ENCODE measurements at regions of chr3 and their contacts with region 1.

Region 1: GRCh38 chr3:70726961-70727360 is 414.5 kb upstream of the MDFIC2 start:
- DNase-seq: no peak

Region 2: DNA sequence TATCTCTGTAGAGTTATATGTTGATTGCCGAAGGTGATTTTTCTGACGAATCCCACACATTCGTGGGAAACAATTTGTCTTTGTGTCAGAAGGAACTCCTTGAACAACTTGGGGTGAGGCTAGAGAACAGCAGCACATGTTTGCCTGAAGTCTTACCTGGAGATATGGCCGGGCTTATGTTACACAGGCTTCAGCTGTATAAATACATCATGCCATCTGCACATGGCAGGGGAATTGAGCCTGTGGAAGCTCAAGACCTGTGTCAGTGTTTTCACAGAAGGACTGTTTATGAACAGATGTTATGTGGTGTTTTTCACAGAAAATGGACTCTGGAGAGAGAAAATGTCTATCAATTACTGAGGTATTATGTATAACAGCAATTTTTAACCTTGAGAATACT is 210.9 kb before region 1 on chr3:
- intact Hi-C with region 1: no loop called
- DNase-seq: no peak

Region 3: DNA sequence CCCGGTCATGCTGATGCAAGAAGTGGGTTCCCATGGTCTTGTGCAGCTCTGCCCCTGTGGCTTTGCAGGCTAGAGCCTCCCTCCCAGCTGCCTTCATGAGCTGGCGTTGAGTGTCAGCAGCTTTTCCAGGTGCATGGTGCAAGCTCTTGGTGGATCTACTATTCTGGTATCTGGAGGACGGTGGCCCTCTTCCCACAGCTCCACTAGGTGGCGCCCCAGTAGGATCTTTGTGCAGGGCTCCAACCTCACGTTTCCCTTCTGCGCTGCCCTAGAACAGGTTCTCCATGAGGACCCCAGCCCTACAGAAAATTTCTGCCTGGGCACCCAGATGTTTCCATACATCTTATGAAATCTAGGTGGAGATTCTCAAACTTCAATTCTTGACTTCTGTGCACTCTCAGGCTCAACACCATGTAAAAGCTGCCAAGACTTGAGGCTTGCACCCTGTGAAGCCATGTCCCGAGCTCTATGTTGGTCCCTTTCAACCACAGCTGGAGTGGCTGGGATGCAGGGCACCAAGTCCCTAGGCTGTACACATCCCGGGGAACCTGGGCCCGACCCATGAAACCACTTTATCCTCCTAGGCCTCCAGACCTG is 176.1 kb before region 1 on chr3:
- intact Hi-C with region 1: no loop called
- DNase-seq: no peak

Region 4: DNA sequence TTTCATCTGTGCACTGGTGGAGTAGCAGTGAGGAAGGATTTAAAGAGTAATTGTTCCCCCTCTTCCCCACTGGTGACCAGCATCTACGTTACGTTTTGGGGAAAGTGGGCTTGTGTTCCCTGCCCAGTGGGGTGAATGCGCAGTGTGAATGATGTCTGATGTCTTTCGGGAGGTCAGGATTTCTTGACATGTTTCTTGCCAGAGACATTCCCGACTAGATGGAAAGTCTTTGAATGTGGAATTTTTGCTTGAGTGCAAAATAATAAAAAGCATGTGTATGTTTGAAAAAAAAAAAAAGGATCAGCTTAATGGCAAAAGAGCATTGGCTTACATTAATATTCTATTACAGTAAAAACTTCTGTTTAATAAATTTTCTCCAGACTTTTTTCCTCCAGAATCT is 224.4 kb after region 1 on chr3:
- intact Hi-C with region 1: loop called (anchors 10 kb)
- DNase-seq: no peak

Measured in cardiac septum (tissue), 1 donor.